IMR-90 (cell line): ENCODE measurements at regions of chr17 and their contacts with region 1.

Region 1: GRCh38 chr17:43591779-43592562 is 45.8 kb upstream of the ETV4 start:
- DNase-seq: peak; percentile 92
- ATAC-seq: peak; percentile 87
- H3K4me3 ChIP-seq: no peak overlapping the region
- H3K27ac ChIP-seq: peak overlapping the region; percentile 78
- H3K4me1 ChIP-seq: peaks cover 14% of the 10 kb centered on the region
- H3K27me3 ChIP-seq: no peaks in the 10 kb centered on the region
- CTCF ChIP-seq: 0 out of 2 replicates have a peak, but pooled peaks have one; percentile 10
- POLR2A ChIP-seq: peak; percentile 69; the same call in 1 of the 2 replicates
- RAD21 ChIP-seq: no peak; the same call in 1 of the 2 replicates

Region 2: GRCh38 chr17:43442711-43443110 is 149.3 kb before region 1 on chr17:
- CTCF ChIA-PET with region 1: no interaction called
- POLR2A ChIA-PET with region 1: no interaction called
- dilution Hi-C with region 1: no loop called
- in situ Hi-C with region 1: no loop called
- intact Hi-C with region 1: no loop called
- DNase-seq: peak; percentile 80
- ATAC-seq: peak; percentile 81
- H3K4me3 ChIP-seq: no peak overlapping the region
- H3K27ac ChIP-seq: no peak overlapping the region
- H3K4me1 ChIP-seq: peaks cover 7% of the 10 kb centered on the region
- H3K27me3 ChIP-seq: no peaks in the 10 kb centered on the region
- CTCF ChIP-seq: no peak
- POLR2A ChIP-seq: no peak
- RAD21 ChIP-seq: no peak

Region 3: DNA sequence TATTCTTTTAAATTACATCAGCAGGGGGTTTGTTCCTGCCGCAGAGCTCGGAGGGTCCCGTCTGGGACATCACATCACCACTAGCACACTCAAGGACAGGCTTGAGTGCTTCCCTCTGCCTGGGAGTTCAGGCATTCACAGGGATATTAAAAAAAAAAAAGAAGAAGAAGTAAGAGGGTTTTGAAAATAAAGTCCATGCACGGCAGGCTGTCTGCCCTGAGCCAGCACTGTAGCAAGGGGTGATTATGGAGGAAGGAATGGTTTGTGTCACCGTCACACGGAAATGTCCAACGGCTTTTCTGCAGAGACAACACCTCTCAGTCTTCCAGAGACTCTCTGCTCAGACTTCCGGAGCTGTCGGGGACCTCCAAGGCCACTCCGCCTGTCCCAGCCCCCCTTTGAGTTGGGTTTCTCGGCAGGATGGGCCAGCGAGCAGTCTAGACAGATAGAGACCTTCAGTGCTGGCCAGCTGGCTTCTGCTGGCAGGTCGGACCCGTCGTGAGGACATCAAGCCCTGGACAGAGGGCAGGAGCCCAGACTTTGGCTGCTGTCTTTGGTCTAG is 36.2 kb after region 1 on chr17:
- CTCF ChIA-PET with region 1: no interaction called
- POLR2A ChIA-PET with region 1: no interaction called
- dilution Hi-C with region 1: no loop called
- in situ Hi-C with region 1: no loop called
- intact Hi-C with region 1: loop called (anchors 5 kb)
- DNase-seq: peak; percentile 31
- ATAC-seq: peak; percentile 54
- H3K4me3 ChIP-seq: no peak overlapping the region
- H3K27ac ChIP-seq: no peak overlapping the region
- H3K4me1 ChIP-seq: peaks cover 5% of the 10 kb centered on the region; the same call in 1 of the 2 replicates
- H3K27me3 ChIP-seq: peaks cover 20% of the 10 kb centered on the region
- CTCF ChIP-seq: no peak
- POLR2A ChIP-seq: no peak
- RAD21 ChIP-seq: no peak